ENCODE measurements at regions of chr7 and their contacts with region 1.

Region 1: DNA sequence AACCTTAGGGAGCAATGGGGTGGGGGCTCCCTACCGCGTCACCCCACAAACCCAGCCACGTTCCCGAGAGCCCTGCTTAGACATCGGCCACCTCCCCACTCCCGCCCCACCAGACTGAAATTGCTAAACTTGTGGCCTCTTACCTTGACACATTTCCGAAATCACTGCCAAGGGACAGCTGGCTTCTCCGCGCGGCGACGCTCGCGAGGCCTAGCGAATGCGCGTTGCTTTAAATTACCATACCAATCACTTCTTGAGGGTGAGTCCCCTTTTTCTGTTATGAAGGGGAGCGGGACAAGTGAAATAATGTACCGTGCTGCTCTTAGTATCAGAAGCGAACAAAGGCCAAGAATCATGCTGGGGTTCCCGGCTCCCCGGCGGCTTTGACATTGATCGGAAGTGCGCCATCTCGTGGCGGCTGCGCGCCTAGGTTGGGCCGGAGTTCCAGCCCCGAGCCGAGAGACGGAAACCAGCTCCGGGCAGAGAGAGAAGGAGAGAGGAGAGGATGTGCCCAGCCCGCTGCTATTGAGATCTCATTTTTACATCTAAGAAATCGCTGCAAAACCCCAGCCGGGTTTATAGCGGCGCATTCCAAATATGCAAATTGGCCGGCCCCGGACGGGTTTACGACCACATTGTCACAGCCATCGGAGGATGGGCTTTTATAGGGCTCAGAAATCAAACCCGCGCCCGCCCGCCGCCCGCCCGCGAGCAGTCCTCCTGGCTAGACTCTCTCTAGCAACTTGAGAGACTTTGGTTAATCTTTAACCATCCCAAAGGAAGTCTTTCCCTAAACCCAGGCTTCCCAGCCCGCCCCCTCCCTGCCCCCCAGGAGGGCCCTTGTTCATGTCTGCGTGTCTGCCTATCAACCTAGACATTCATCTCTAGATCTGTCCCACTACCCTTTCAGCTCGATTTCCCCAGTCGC is 5.3 kb downstream of the HOXA11 start:
- DNase-seq: peak; percentile 73
- ATAC-seq: peak; percentile 78
- H3K4me3 Mint-ChIP-seq: no peak overlapping the region
- H3K27ac Mint-ChIP-seq: no peak overlapping the region
- H3K4me1 Mint-ChIP-seq: peaks cover 5% of the 10 kb centered on the region
- H3K27me3 Mint-ChIP-seq: peaks cover 68% of the 10 kb centered on the region
- CTCF ChIP-seq: peak; percentile 84

Region 2: DNA sequence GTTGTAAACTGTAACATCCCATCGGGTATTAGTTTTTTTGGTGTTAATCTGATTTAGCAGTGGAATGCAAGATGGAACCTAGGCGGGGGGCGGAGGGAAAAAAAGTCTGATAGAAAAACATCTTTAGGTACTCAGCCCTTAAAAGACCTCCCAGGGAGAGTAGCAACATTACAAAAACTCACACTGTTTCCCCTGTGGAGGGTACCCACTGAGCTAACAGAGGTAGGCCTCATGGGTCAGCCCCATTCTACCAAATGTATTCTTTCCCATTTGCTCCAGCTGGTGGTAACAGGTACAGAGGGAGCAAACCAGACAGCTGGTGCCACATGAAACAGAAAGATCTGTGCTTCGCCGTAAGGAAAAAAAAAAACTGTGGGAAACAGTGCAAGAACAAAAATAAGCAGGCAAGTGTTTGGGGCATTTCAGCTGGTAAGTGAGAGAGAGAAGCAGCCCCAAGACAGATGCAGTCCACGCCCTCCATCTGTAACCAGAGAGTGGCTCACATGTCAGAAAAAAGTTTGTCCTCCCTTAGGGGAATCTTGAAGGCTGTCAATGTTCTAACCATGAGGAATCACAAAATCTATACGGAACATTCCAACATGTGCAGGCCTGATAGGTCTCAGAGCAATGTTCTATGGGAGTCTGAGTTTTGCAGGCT is 149.2 kb before region 1 on chr7:
- CTCF ChIA-PET with region 1: no interaction called
- POLR2A ChIA-PET with region 1: no interaction called
- intact Hi-C with region 1: no loop called
- DNase-seq: no peak
- ATAC-seq: no peak
- H3K4me3 Mint-ChIP-seq: no peak overlapping the region
- H3K27ac Mint-ChIP-seq: no peak overlapping the region
- H3K4me1 Mint-ChIP-seq: peaks cover 21% of the 10 kb centered on the region
- H3K27me3 Mint-ChIP-seq: no peaks in the 10 kb centered on the region
- CTCF ChIP-seq: no peak

Region 3: GRCh38 chr7:27150568-27151340 is 29.0 kb before region 1 on chr7:
- CTCF ChIA-PET with region 1: interaction called, 12 read pairs
- POLR2A ChIA-PET with region 1: no interaction called
- intact Hi-C with region 1: no loop called
- DNase-seq: peak; percentile 75
- ATAC-seq: peak; percentile 87
- H3K4me3 Mint-ChIP-seq: peak overlapping the region; percentile 59
- H3K27ac Mint-ChIP-seq: no peak overlapping the region
- H3K4me1 Mint-ChIP-seq: peaks cover 33% of the 10 kb centered on the region
- H3K27me3 Mint-ChIP-seq: peaks cover 88% of the 10 kb centered on the region
- CTCF ChIP-seq: peak; percentile 93